HCT116 (cell line): ENCODE measurements at regions of chr17 and their contacts with region 1.

Region 1: DNA sequence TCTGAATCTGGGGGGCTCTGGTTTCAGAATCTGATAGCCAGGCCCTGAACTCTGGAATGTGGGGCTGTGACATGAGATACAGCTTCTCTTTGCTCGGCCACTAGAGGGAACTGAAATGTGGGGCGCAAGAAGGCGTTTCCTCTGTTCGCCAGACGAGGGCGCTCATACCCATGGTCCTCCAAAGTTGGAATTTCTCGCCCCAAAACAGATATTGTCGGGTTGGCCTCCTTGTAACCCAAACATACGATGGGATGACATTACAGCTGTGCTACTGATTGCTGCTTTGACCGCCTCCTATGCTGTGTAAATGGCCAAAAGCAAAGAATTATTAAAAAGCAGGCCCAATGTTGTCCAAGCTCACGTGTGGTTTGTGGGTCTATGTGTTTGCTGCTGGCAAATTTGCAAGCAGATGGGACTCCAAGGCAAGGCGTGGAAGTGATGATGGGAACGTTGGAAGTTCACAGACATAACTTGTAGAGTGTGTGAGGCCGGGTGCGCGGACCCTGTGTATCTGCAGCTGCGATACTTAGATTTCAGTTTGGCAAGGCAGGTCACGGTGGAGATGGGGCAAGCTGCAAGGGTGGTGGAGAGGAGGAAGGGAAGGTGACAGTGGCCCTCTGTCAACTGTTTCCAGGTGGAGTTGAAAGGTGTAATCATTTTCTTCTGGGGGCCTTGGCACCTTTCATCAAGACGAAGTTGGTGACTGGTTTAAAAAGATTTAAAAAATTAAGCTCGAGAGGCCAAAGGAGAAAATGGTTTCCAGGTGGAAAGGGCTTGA is 13.0 kb upstream of the MSI2 start:
- DNase-seq: peak; percentile 71
- ATAC-seq: peak; percentile 95
- H3K4me3 ChIP-seq: no peak overlapping the region
- H3K27ac ChIP-seq: no peak overlapping the region
- H3K4me1 ChIP-seq: peaks cover 0 to 5% of the 10 kb centered on the region in 2 experiments; a peak in 1 of 4 replicates
- H3K27me3 ChIP-seq: no peaks in the 10 kb centered on the region
- CTCF ChIP-seq: peak; percentile 100
- POLR2A ChIP-seq: no peak
- RAD21 ChIP-seq: peak; percentile 99

Region 2: GRCh38 chr17:57401556-57402488 is 158.5 kb after region 1 on chr17:
- CTCF ChIA-PET with region 1: interaction called, 17 read pairs
- POLR2A ChIA-PET with region 1: interaction called, 4 read pairs
- RAD21 ChIA-PET with region 1: interaction called, 3 to 6 read pairs
- intact Hi-C with region 1: loop called (anchors 1 kb)
- DNase-seq: no peak
- ATAC-seq: peak; percentile 58
- H3K4me3 ChIP-seq: no peak overlapping the region
- H3K27ac ChIP-seq: no peak overlapping the region; the same call in 1 of the 2 replicates
- H3K4me1 ChIP-seq: peaks cover 12 to 27% of the 10 kb centered on the region in 2 experiments; a peak in 2 of 4 replicates
- H3K27me3 ChIP-seq: no peaks in the 10 kb centered on the region
- CTCF ChIP-seq: peak; percentile 28 to 45 (median 28); a peak in 4 of 6 replicates
- POLR2A ChIP-seq: no peak
- RAD21 ChIP-seq: peak; percentile 44

Region 3: DNA sequence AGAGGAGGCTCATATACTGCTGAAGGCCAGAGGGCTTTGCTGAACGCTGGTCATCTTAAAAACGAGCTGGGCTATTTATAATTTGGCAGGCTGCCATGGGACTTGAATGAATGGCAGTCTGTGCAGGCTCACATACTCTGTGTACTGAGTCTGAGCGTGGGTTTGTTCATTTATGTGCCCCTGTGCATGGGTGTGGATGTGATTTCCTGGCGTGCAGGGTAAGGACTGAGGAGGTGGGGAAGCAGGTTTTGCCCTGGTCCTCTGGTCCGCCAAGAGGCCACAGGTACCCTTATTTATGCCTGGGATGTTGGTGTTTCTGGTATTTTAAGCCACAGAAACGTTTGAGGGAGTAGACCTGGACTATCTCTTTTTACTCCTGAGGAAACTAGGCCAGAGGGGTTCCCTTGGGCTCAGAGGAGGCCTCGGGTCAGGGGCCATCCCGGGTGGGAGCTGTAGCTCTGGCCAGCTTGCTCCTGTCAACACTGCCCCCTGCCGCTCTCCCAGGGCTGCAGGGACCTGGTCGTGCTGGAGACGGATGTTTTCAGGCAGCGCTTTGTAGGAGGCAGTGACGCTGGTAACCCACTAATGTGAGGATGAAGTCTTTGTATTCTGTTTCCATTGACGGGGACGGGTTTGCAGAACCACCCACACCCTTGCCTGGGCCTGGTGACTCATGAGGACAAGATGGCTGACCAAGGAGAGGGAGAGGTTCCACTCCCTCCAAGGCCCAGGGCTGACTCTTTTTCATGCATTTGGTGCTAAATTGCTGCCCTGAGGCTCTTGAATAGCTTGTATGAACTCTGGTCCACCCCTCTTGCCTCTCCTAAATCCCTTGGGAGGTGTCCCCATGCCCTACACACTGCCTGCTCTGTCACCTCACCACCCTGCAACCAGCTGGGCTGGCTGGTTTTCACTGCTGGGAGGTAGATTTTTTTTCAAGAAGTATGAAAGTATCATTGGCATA is 197.4 kb after region 1 on chr17:
- CTCF ChIA-PET with region 1: interaction called, 57 read pairs
- POLR2A ChIA-PET with region 1: interaction called, 4 read pairs
- RAD21 ChIA-PET with region 1: interaction called, 12 to 15 read pairs
- intact Hi-C with region 1: loop called (anchors 1 kb)
- DNase-seq: peak; percentile 76
- ATAC-seq: peak; percentile 86
- H3K4me3 ChIP-seq: peak overlapping the region in 1 of 2 experiments; percentile 23; a peak in 2 of 4 replicates
- H3K27ac ChIP-seq: peak overlapping the region; percentile 86
- H3K4me1 ChIP-seq: peaks cover 67 to 79% of the 10 kb centered on the region in 2 experiments
- H3K27me3 ChIP-seq: no peaks in the 10 kb centered on the region
- CTCF ChIP-seq: peak; percentile 94 to 95 (median 95)
- POLR2A ChIP-seq: no peak
- RAD21 ChIP-seq: peak; percentile 80

Region 4: GRCh38 chr17:57671667-57672632 is 428.6 kb after region 1 on chr17:
- CTCF ChIA-PET with region 1: interaction called, 33 read pairs
- POLR2A ChIA-PET with region 1: interaction called, 4 read pairs
- RAD21 ChIA-PET with region 1: interaction called, 6 read pairs
- intact Hi-C with region 1: loop called (anchors 1 kb)
- DNase-seq: peak; percentile 47
- ATAC-seq: peak; percentile 100
- H3K4me3 ChIP-seq: no peak overlapping the region
- H3K27ac ChIP-seq: no peak overlapping the region
- H3K4me1 ChIP-seq: peaks cover 0 to 3% of the 10 kb centered on the region in 2 experiments; a peak in 1 of 4 replicates
- H3K27me3 ChIP-seq: no peaks in the 10 kb centered on the region
- CTCF ChIP-seq: peak; percentile 93 to 100 (median 100)
- POLR2A ChIP-seq: no peak
- RAD21 ChIP-seq: peak; percentile 95

Region 5: GRCh38 chr17:57747221-57748017 is 504.1 kb after region 1 on chr17:
- CTCF ChIA-PET with region 1: interaction called, 27 read pairs
- POLR2A ChIA-PET with region 1: no interaction called
- RAD21 ChIA-PET with region 1: interaction called in 1 of 2 experiments, 5 read pairs
- intact Hi-C with region 1: loop called (anchors 1 kb)
- DNase-seq: peak; percentile 76
- ATAC-seq: peak; percentile 93
- H3K4me3 ChIP-seq: no peak overlapping the region
- H3K27ac ChIP-seq: no peak overlapping the region
- H3K4me1 ChIP-seq: no peaks in the 10 kb centered on the region
- H3K27me3 ChIP-seq: peaks cover 10% of the 10 kb centered on the region; the same call in 1 of the 2 replicates
- CTCF ChIP-seq: peak; percentile 92 to 98 (median 93)
- POLR2A ChIP-seq: no peak
- RAD21 ChIP-seq: peak; percentile 96